Thyroid gland (tissue), 4 donors: ENCODE measurements at regions of chr4 and their contacts with region 1.

Region 1: DNA sequence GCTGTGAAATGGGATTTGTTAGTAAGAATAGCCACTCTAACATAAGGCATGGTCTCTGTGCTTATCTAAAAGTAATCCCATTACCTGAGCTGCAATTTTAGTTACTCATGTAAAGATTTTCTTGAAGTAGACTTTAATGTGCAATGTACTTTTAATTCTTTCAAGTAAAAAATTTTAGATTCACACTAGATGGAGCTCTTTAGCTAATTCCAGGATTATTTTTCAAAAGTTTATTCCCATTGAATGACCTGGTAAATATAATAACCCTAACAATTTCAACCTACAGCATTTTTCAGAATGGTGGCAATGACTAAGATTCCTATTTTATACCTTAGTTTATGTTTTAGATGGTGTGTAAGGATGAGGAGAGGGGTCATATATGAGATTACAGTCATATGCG is 18.1 kb downstream of the USP38 start:
- DNase-seq: no peak
- H3K4me3 ChIP-seq: no peak overlapping the region
- H3K27ac ChIP-seq: no peak overlapping the region
- H3K4me1 ChIP-seq: no peaks in the 10 kb centered on the region
- H3K27me3 ChIP-seq: no peaks in the 10 kb centered on the region
- CTCF ChIP-seq: peak in 3 of 6 experiments; percentile 12 to 29 (median 19)
- POLR2A ChIP-seq: no peak

Region 2: GRCh38 chr4:142778430-142778829 is 424.4 kb before region 1 on chr4:
- intact Hi-C with region 1: no loop called
- DNase-seq: no peak
- H3K4me3 ChIP-seq: no peak overlapping the region
- H3K27ac ChIP-seq: no peak overlapping the region
- H3K4me1 ChIP-seq: no peaks in the 10 kb centered on the region
- H3K27me3 ChIP-seq: no peaks in the 10 kb centered on the region
- CTCF ChIP-seq: no peak
- POLR2A ChIP-seq: no peak

Region 3: GRCh38 chr4:143399113-143399949 is 196.5 kb after region 1 on chr4:
- intact Hi-C with region 1: no loop called
- DNase-seq: no peak
- H3K4me3 ChIP-seq: no peak overlapping the region
- H3K27ac ChIP-seq: no peak overlapping the region
- H3K4me1 ChIP-seq: peaks cover 17 to 29% of the 10 kb centered on the region in 2 donors
- H3K27me3 ChIP-seq: no peaks in the 10 kb centered on the region
- CTCF ChIP-seq: peak in 5 of 6 experiments; percentile 32 to 70 (median 50)
- POLR2A ChIP-seq: no peak

Region 4: GRCh38 chr4:143482840-143483239 is 280.0 kb after region 1 on chr4:
- intact Hi-C with region 1: loop called (anchors 5 kb)
- DNase-seq: peak in 1 of 2 donors; percentile 7
- H3K4me3 ChIP-seq: no peak overlapping the region
- H3K27ac ChIP-seq: no peak overlapping the region
- H3K4me1 ChIP-seq: no peaks in the 10 kb centered on the region
- H3K27me3 ChIP-seq: no peaks in the 10 kb centered on the region
- CTCF ChIP-seq: peak; percentile 9 to 73 (median 58)
- POLR2A ChIP-seq: no peak